ENCODE measurements at regions of chr22 and their contacts with region 1.

Region 1: DNA sequence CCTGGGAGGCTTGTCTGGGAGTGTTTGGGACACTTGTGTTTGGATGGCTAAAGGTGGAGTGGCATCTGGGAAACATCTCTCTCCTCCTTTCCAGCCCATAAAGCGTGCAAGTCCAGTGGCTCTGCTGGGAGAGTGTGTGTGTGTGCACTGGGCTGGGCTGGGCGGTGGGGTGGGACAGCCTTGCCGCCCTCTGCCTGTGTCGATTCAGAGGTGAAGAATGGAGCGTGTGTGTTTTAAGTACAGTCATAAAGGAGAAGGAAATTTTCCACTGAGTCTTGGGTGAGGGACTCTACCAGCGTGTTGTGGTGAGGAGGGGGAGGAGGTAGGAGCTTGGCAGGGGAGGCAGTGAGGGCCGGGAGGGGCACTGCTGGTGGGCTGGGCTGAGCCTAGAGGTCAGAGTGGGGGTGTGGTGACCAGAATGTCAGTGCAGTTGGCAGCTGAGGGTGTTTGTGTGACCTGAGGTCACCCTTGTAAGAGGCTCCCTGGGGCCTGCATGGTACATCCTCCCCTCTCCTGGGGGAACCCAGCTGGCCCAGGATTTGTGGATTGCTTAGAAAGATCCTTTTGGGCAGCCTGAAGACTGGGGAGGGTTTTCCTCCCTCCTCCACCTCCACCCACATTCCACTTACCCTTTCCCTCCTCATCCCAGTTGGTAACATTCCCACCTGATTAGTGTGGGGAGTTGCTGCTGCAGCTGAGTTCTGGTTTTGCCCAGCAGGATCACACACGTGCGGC is 1.7 kb downstream of the TIMP3 start:
- DNase-seq: peak; percentile 68
- H3K4me3 ChIP-seq: peak overlapping the region; percentile 61 to 89 (median 68)
- H3K27ac ChIP-seq: peak overlapping the region; percentile 41
- H3K4me1 ChIP-seq: peaks cover 21% of the 10 kb centered on the region
- H3K27me3 ChIP-seq: no peaks in the 10 kb centered on the region
- CTCF ChIP-seq: no peak

Region 2: DNA sequence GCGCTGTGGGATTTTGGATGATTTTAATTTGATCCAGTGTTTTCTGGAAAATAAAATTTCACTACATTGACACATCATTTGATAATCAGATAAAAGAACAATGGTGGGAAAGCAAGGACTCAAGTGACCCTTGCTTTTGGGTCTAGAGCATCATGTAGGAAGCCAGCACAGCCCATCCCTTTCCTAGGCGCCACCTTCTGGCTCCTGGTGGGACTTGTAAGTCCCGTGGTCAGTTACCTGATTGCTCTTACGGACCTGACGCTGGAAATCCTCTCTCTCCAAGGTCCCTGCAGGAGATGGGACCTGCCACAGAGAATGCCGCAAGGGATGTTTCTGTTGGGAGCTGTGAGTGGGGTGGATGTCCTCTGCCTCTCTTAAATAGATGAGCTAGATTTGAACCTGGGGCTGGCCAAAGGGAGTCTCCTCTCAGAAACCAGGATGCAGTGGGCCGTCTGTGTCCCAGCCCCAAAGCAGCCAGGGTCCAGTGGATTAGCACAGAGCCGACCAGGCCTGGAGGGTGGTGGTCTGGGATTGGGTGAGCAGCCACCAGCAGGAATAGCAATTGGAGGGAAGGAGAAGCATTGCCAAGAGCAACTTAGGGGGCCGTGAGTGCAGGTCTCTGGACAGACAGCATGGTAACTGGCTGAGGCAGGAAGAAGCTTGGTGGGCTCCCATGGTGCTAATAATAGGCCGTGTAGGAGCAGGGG is 20.0 kb after region 1 on chr22:
- CTCF ChIA-PET with region 1: interaction called, 19 read pairs
- dilution Hi-C with region 1: no loop called
- in situ Hi-C with region 1: no loop called
- intact Hi-C with region 1: loop called (anchors 1 kb)
- DNase-seq: no peak
- H3K4me3 ChIP-seq: no peak overlapping the region
- H3K27ac ChIP-seq: no peak overlapping the region
- H3K4me1 ChIP-seq: peaks cover 29% of the 10 kb centered on the region
- H3K27me3 ChIP-seq: no peaks in the 10 kb centered on the region
- CTCF ChIP-seq: peak; percentile 40 to 44